ENCODE measurements at regions of chr12 and their contacts with region 1.

Region 1: DNA sequence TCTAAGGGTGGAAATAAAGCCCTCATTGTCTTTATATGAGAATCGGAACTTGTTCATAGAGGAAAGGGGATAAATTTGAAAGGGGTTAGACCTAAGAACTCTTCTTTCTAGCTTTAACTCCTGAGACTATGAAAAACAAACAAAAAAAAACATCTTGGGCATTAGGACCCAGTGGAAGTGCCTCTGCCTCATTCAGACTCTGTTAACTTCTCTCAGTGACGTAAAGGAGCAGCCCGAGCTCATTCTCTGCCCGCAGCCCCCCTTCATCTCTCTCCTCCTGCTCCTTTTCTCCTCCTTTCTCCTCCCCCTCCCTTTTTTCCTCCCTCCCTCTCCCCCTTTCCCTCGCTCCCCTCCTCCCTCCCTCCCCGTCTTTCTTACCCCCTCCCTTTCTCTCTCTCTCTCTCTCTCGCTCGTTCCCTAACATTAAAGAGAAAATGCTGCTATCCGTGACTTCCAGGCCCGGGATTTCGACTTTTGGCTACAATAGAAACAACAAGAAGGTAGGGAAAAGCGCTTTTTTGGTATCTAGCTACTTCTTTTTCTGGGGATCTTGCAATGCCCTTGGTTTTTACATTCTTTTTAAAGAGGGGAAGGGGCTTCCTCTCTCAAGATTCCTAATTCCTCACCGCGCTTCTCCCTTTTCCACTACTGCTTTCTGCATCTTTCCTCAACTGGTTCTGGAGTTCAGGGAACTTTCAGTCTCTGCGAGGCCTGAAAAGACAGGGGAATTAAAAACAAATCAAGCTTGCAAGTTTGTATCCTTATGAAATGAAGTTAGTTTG is at the start of gene RBMS2:
- DNase-seq: peak; percentile 82
- ATAC-seq: peak; percentile 96 to 98
- total RNA-seq, gene RBMS2: 32.6 to 40.7 TPM

Region 2: GRCh38 chr12:56571126-56571525 is 49.3 kb after region 1 on chr12:
- intact Hi-C with region 1: loop called in 1 of 2 experiments (anchors 2 kb)
- DNase-seq: no peak
- ATAC-seq: peak in 1 of 2 donors; percentile 62

Region 3: DNA sequence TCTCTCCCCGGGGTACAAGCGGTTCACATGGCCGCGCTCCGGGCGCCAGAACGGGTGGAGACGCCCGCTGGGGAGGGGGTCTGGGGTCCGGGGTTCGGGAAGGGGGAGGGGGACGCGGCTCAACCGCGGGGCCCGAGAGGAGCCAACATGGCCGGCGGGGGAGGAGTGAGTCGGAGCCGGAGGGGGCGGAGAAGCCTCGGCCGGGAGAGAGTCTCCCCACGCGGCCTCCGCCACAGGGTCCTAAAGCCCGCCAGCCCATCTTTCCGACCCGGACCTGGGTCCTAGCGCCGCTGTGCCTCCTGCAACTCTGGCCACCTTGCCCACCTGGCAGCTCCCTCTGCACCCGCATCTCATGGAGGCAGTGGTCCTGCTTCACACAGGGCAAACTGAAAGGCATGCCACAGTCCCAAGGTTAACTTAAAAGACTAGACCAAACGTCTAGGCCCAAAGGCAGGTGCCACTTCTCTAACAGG is 108.4 kb after region 1 on chr12 and contains the start of gene BAZ2A:
- intact Hi-C with region 1: loop called in 1 of 2 experiments (anchors 5 kb)
- DNase-seq: peak; percentile 93
- ATAC-seq: peak; percentile 88
- total RNA-seq, gene BAZ2A: 38.3 to 54.1 TPM